MCF 10A (cell line): ENCODE measurements at regions of chr15 and their contacts with region 1.

Region 1: DNA sequence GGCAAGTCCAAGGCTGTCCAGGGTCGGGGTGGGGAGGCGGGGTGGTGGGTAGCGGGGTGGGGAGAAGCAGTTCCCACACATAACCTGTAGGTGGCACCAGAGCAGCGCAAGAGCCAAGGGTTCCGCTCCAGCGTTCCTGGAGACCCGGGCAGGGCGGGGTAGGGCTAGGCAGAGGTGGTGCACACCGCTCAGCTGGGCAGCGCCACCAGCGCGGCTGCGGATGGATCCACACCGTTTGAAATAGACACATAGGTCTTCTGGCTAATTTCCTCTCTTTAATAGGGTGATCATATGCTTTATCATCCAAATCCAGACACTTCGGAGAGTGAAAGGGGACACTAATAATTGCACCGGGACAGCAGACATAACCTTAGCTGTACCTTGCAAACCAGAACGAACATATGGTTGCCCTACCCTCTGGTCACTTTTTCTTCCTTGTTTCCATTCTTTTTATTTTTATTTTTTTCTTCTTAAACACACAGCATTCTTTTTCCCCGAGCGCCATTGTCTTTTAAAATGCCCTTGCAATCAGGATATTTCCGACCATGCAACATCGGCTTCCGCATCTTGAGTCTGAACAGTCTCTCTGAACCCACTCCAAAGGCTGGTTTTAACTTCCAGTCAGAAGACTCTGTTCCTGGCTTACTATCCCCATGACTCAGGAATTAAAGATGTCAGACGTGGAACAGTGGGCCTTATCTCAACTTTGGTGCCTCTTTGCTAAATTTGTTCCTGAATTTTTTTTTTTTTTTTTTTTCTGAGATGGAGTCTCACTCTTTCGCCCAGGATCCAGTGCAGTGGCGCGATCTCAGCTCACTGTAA is 12.5 kb upstream of the ZSCAN2 start:
- DNase-seq: peak; percentile 87
- H3K4me3 Mint-ChIP-seq: peak overlapping the region; percentile 59
- H3K27ac Mint-ChIP-seq: peak overlapping the region; percentile 76
- H3K4me1 Mint-ChIP-seq: peaks cover 6% of the 10 kb centered on the region
- H3K27me3 Mint-ChIP-seq: peaks cover 12% of the 10 kb centered on the region
- CTCF ChIP-seq: peak; percentile 95

Region 2: DNA sequence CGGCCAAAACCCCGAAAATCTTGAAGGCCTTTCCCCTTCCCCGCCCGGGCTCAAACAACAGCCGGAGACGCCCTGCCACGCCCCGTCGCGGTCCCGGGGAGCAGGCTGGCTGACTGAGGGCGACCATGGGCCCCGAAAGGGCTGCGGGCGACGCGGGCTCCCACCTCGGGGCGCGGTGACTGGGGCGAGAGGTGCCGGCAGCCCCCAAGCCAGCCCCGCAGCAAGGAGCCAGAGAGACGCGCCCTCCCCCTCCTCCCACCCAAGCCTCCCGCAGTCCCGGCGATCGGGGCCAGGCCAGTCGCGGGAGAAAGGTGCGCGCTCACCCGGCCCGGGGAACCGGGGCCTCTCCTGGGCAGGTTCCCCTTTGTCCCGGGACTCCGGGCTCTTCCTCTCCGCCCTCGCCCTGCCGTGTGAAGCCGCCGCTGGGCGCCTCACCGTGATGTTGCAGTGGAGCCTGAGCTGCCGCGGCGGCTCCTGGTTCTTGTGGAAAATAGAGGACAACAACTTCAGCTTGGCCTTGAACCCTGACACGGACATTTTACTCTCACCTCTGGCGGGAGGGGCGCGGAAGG is 18.0 kb before region 1 on chr15:
- CTCF ChIA-PET with region 1: interaction called, 10 read pairs
- POLR2A ChIA-PET with region 1: interaction called, 9 read pairs
- intact Hi-C with region 1: no loop called
- DNase-seq: peak; percentile 50
- H3K4me3 Mint-ChIP-seq: peak overlapping the region; percentile 76
- H3K27ac Mint-ChIP-seq: peak overlapping the region; percentile 76
- H3K4me1 Mint-ChIP-seq: peaks cover 5% of the 10 kb centered on the region
- H3K27me3 Mint-ChIP-seq: no peaks in the 10 kb centered on the region
- CTCF ChIP-seq: no peak

Region 3: GRCh38 chr15:84616235-84616634 is 28.0 kb after region 1 on chr15:
- CTCF ChIA-PET with region 1: no interaction called
- POLR2A ChIA-PET with region 1: no interaction called
- intact Hi-C with region 1: no loop called
- DNase-seq: no peak
- H3K4me3 Mint-ChIP-seq: no peak overlapping the region
- H3K27ac Mint-ChIP-seq: no peak overlapping the region
- H3K4me1 Mint-ChIP-seq: no peaks in the 10 kb centered on the region
- H3K27me3 Mint-ChIP-seq: no peaks in the 10 kb centered on the region
- CTCF ChIP-seq: no peak

Region 4: GRCh38 chr15:84874981-84875699 is 286.9 kb after region 1 on chr15:
- CTCF ChIA-PET with region 1: interaction called, 3 read pairs
- POLR2A ChIA-PET with region 1: interaction called, 3 read pairs
- intact Hi-C with region 1: loop called (anchors 5 kb)
- DNase-seq: no peak
- H3K4me3 Mint-ChIP-seq: no peak overlapping the region
- H3K27ac Mint-ChIP-seq: no peak overlapping the region
- H3K4me1 Mint-ChIP-seq: no peaks in the 10 kb centered on the region
- H3K27me3 Mint-ChIP-seq: no peaks in the 10 kb centered on the region
- CTCF ChIP-seq: no peak

Region 5: GRCh38 chr15:84929744-84930371 is 341.6 kb after region 1 on chr15:
- CTCF ChIA-PET with region 1: interaction called, 13 read pairs
- POLR2A ChIA-PET with region 1: interaction called, 4 read pairs
- intact Hi-C with region 1: loop called (anchors 2 kb)
- DNase-seq: peak; percentile 52
- H3K4me3 Mint-ChIP-seq: no peak overlapping the region
- H3K27ac Mint-ChIP-seq: no peak overlapping the region
- H3K4me1 Mint-ChIP-seq: peaks cover 20% of the 10 kb centered on the region
- H3K27me3 Mint-ChIP-seq: no peaks in the 10 kb centered on the region
- CTCF ChIP-seq: no peak